Posterior vena cava (tissue), 2 donors: ENCODE measurements at regions of chr3 and their contacts with region 1.

Region 1: GRCh38 chr3:52339612-52340011 is 23.5 kb downstream of the DNAH1 start:
- DNase-seq: peak; percentile 2

Region 2: GRCh38 chr3:52028572-52028971 is 311.0 kb before region 1 on chr3:
- intact Hi-C with region 1: no loop called
- DNase-seq: no peak

Region 3: GRCh38 chr3:52225452-52226228 is 114.0 kb before region 1 on chr3 and contains the start of gene TLR9:
- intact Hi-C with region 1: loop called (anchors 5 kb)
- DNase-seq: peak; percentile 69
- total RNA-seq, gene TLR9: 0.46 to 0.52 TPM

Region 4: GRCh38 chr3:52299879-52300611 is 39.6 kb before region 1 on chr3:
- intact Hi-C with region 1: loop called in 1 of 2 experiments (anchors 1 kb)
- DNase-seq: no peak

Region 5: GRCh38 chr3:52317208-52318000 is 22.2 kb before region 1 on chr3:
- intact Hi-C with region 1: no loop called
- DNase-seq: peak; percentile 85

Region 6: DNA sequence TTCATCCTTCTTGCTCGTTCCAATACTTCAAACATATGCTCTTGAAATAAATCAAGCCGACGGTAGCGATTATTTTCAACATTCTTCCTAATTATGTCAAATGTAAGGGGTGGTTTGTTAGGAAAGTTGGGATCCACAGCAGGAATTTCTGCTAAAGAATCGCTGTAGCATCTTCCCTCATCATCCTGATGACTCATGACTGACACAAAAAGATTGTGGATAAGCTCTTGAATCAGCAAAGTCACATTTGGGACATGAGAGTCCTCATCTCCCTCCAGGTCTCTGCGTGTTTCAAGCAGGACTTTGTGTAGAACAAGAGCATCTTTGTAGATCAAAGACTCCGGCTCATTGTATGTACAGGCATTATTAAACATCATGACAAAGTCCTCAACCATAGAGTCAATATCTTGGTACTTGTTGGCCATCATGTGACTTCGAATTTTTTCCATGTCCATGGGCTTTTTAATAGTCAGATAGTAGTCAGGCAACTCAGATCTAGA is 269.8 kb after region 1 on chr3:
- intact Hi-C with region 1: no loop called
- DNase-seq: no peak

Region 7: DNA sequence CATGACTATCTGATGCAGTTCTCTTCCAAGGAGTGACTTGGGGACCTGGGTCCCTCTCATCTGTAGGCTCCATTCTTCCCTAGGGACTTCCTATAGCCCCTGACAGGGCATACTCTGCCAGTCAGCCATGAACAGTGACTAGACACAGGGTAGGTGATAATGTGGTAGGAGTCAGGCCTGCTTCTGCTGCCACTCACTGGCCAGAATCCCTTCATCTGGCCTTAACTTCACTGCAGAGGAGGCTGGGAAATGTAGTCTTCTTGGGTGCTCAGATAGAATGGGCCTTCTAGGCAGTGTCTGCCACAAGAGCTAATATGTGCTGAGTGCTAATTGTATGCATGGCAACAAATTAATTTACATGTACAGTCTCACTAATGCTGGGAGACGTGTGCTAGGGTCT is 1867.3 kb after region 1 on chr3:
- intact Hi-C with region 1: no loop called
- DNase-seq: no peak